Endothelial cell of umbilical vein (primary cell): ENCODE measurements at regions of chr20 and their contacts with region 1.

Region 1: GRCh38 chr20:57709931-57710799 is at the start of gene PMEPA1:
- DNase-seq: peak; percentile 96
- H3K4me3 ChIP-seq: peak within 1 kb of the TSS; percentile 79 to 88 (median 81)
- H3K27ac ChIP-seq: peak within 1 kb of the TSS; percentile 83
- H3K4me1 ChIP-seq: peaks cover 14% of the 10 kb centered on the region
- H3K27me3 ChIP-seq: no peaks in the 10 kb centered on the region
- CTCF ChIP-seq: peak in 1 of 2 donors; percentile 15
- POLR2A ChIP-seq: no peak
- total RNA-seq, gene PMEPA1: 31.6 and 47.1 TPM in 2 replicates

Region 2: DNA sequence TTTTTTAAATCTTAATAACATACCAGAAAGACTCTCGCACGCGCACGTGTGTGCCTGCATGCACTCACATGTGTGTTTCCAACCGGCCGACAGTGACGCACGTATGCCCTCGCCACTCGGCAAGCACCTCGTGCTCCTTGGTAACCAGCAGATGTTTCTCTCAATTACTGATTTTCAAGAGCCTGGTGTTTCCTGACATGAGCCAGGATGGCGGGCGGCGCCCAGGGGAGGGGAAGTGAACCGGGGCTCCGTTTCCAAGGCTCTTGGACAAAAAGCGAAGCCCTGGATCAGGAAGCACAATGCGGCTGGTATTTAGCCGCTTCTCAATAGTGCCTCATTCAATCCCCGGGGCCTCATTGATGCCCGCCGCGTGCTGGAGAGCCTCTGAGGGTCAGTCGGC is 38.0 kb before region 1 on chr20:
- CTCF ChIA-PET with region 1: interaction called, 3 read pairs
- POLR2A ChIA-PET with region 1: no interaction called
- dilution Hi-C with region 1: no loop called
- intact Hi-C with region 1: loop called (anchors 1 kb)
- DNase-seq: peak; percentile 86
- H3K4me3 ChIP-seq: no peak overlapping the region
- H3K27ac ChIP-seq: peak overlapping the region; percentile 61
- H3K4me1 ChIP-seq: peaks cover 7% of the 10 kb centered on the region
- H3K27me3 ChIP-seq: no peaks in the 10 kb centered on the region
- CTCF ChIP-seq: no peak
- POLR2A ChIP-seq: no peak

Region 3: GRCh38 chr20:57769756-57770155 is 59.6 kb after region 1 on chr20:
- CTCF ChIA-PET with region 1: interaction called, 3 read pairs
- POLR2A ChIA-PET with region 1: interaction called, 4 read pairs
- dilution Hi-C with region 1: no loop called
- intact Hi-C with region 1: loop called (anchors 1 kb)
- DNase-seq: peak; percentile 61
- H3K4me3 ChIP-seq: no peak overlapping the region
- H3K27ac ChIP-seq: peak overlapping the region; percentile 62
- H3K4me1 ChIP-seq: peaks cover 44% of the 10 kb centered on the region
- H3K27me3 ChIP-seq: no peaks in the 10 kb centered on the region
- CTCF ChIP-seq: no peak
- POLR2A ChIP-seq: no peak